ENCODE measurements at regions of chr13 and their contacts with region 1.

Region 1: DNA sequence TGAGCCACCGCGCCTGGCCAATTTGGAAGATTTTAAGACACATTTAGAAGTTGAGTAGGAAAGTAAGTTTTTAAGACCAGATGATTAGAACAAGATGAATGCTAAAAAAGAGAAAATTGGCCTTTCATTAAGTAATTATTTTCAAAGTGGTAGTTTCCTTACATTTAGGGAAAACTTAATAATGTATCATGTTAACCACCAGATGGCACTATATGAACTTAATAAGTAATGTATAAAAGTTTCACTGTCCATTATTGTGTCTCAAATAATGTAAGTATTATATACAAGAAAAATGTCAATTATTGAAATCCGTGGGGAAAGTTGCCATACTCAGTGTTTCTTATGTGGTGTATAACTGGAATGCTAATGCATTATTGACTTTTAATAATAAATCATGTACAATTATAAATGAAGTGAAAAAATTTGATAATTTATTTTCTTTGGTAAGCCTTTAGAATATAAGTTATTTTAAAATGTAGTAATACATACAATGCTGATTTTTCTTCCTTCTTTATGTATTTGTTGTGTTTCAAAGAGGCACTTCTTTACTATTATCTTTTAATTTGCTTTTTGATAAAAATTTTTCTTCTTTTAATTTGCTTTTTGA is 29.2 kb downstream of the COG6 start:
- DNase-seq: no peak
- H3K4me3 ChIP-seq: no peak overlapping the region
- H3K27ac ChIP-seq: no peak overlapping the region
- H3K4me1 ChIP-seq: no peaks in the 10 kb centered on the region
- H3K27me3 ChIP-seq: no peaks in the 10 kb centered on the region
- CTCF ChIP-seq: peak in 2 of 3 donors; percentile 32 to 57
- EP300 ChIP-seq: no peak
- POLR2A ChIP-seq: no peak

Region 2: DNA sequence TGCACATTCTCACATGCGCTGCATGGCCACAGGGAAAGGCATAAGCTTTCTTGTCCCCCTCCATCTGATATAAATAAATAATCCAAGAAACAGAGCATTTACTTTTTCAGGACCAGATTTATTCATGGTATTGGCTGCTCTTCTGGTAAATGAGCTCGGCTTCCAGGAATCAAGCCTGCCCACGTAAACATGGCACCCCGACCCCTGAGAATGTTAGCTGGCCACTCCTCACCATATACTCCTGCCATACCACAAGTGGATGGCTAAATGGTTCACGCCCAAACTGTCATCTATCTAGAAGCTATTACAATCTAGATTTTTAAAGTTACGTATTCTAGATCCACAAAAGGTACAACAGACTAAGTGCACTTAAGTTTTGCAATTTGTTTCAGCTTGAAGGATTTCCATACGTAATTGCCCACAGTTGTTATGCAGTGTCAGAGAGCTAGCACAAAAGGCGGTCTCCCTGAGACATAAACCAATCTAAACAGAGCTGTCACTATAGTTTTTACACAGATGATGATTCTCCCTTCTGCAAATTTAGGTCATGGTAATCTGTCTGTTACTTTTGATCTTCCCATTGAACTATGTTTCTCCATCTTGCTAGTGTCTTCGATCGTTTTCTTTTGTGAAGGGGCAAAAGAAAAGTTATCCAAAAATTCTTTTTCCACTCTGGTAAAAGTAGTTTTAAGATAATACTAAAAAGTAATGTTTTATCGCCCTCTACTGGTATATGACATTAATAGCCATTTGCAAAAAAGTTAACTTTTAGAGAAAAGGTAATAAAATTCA is 998.0 kb after region 1 on chr13:
- intact Hi-C with region 1: loop called (anchors 5 to 10 kb)
- DNase-seq: no peak
- H3K4me3 ChIP-seq: no peak overlapping the region
- H3K27ac ChIP-seq: no peak overlapping the region
- H3K4me1 ChIP-seq: peaks cover 3% of the 10 kb centered on the region
- H3K27me3 ChIP-seq: no peaks in the 10 kb centered on the region
- CTCF ChIP-seq: peak; percentile 27 to 50 (median 46)
- EP300 ChIP-seq: no peak
- POLR2A ChIP-seq: no peak

Region 3: DNA sequence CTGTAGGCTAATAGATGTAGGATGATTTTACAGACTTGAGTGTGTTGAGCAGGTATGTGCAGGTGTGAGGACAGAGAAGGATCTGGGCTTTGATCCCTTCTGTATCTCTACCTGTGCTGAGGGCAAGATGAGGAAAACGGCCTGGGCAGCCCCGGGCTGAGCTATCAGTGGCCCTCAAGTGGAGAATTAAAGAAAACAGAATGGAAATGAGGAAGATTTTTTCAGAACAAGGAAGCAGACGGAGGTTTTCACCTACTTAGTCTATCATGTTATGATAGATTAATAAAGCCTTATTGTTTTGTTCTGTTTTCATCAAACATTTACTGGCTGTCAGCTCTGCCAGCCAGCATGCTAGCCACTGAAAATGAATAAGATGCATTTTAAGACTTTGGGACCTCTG is 1004.1 kb after region 1 on chr13:
- intact Hi-C with region 1: loop called (anchors 5 to 10 kb)
- DNase-seq: no peak
- H3K4me3 ChIP-seq: no peak overlapping the region
- H3K27ac ChIP-seq: no peak overlapping the region
- H3K4me1 ChIP-seq: no peaks in the 10 kb centered on the region
- H3K27me3 ChIP-seq: no peaks in the 10 kb centered on the region
- CTCF ChIP-seq: no peak
- EP300 ChIP-seq: no peak
- POLR2A ChIP-seq: no peak

Region 4: GRCh38 chr13:40770934-40771618 is 1086.4 kb after region 1 on chr13 and contains the start of gene MRPS31:
- intact Hi-C with region 1: loop called in 1 of 4 experiments (anchors 10 kb)
- DNase-seq: peak; percentile 90 to 95 (median 92)
- H3K4me3 ChIP-seq: peak within 1 kb of the TSS; percentile 48
- H3K27ac ChIP-seq: peak within 1 kb of the TSS; percentile 41 to 77
- H3K4me1 ChIP-seq: peaks cover 5% of the 10 kb centered on the region
- H3K27me3 ChIP-seq: no peaks in the 10 kb centered on the region
- CTCF ChIP-seq: no peak
- EP300 ChIP-seq: no peak
- POLR2A ChIP-seq: peak; percentile 66
- total RNA-seq, gene MRPS31: 17.2 to 27.1 (median 19.1) TPM

Measured in ovary (tissue), 10 donors.